Ascending aorta (tissue), 2 donors: ENCODE measurements at regions of chr17 and their contacts with region 1.

Region 1: DNA sequence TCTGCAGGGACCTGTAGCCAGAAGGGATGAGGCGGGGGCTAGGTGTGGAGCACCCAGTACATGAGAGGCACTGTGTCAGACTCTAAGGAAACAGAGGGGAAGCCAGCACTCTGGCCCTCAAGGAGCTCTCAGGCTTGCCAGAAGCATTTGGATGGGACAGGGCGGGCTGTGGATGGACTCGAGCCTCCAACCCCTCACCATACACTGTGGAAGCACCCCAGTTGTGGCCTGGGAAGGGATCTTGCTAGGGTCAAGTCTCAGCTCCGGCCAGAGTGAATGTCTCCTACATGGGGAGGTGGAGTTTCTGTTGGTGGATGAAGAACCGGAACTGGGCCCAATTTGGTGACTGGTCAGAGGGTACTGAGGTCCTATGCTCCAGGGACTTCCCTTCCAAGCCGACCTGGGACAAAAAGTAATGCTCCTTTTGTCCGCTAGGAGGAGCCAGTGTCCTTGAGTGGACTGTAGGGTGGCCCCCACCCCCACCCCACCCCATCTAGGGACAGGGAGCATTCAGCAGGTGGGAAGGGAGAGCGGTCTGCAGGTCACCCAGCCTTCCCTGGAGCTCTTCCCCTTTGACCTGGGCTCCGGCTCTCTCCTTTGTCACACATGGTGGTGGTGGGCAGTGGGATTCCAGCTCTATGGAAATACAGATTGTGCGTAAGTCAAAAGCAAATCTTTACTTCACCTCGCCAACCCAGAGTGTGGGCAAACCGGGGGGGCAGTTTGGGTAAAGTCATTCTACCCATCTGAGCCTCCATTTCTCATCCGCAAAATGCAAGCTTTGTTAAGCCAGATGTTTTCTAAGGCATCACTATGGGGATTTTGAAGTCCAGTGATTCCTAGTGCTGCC is 20.4 kb upstream of the PHB1 start:
- DNase-seq: no peak
- H3K4me3 ChIP-seq: no peak overlapping the region
- H3K27ac ChIP-seq: no peak overlapping the region
- H3K4me1 ChIP-seq: no peaks in the 10 kb centered on the region
- H3K27me3 ChIP-seq: peaks cover 8% of the 10 kb centered on the region
- CTCF ChIP-seq: peak; percentile 38 to 75 (median 46)

Region 2: GRCh38 chr17:49556223-49556971 is 121.4 kb after region 1 on chr17:
- intact Hi-C with region 1: loop called (anchors 1 kb)
- DNase-seq: peak in 1 of 2 donors; percentile 90
- H3K4me3 ChIP-seq: peak overlapping the region in 1 of 2 donors; percentile 11
- H3K27ac ChIP-seq: no peak overlapping the region
- H3K4me1 ChIP-seq: peaks cover 0 to 2% of the 10 kb centered on the region in 2 donors
- H3K27me3 ChIP-seq: no peaks in the 10 kb centered on the region
- CTCF ChIP-seq: peak; percentile 95 to 97 (median 95)

Region 3: DNA sequence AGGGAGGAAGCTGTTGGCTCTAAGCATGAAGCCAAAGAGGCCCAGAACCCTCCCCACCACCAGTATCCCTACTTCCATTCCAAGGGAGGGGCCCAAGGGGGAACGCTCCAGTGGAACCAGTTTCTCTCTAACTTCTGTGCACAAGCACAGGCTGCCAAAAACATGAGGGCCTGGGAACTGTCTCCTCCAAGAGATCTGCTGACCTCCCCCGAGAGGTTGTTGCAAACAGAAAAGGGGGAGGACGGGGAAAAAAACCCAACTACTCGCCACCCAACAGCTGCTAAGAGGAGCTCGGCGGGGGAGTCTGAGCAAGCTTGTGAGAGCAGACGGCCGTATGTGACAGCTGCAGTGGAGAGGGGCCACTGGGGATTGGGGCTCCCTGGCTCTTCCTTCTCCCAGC is 288.4 kb after region 1 on chr17:
- intact Hi-C with region 1: loop called (anchors 10 kb)
- DNase-seq: no peak
- H3K4me3 ChIP-seq: no peak overlapping the region
- H3K27ac ChIP-seq: peak overlapping the region in 1 of 2 donors; percentile 35
- H3K4me1 ChIP-seq: no peaks in the 10 kb centered on the region
- H3K27me3 ChIP-seq: no peaks in the 10 kb centered on the region
- CTCF ChIP-seq: no peak